ENCODE measurements at regions of chr3 and their contacts with region 1.

Region 1: GRCh38 chr3:18444595-18445400 is 19.7 kb upstream of the SATB1 start:
- DNase-seq: peak; percentile 88
- ATAC-seq: peak; percentile 78
- H3K4me3 ChIP-seq: peak overlapping the region; percentile 38 to 91 (median 88)
- H3K4me3 Mint-ChIP-seq: peak overlapping the region; percentile 95
- H3K27ac ChIP-seq: peak overlapping the region; percentile 85 to 89
- H3K27ac Mint-ChIP-seq: peak overlapping the region; percentile 86
- H3K4me1 ChIP-seq: peaks cover 38 to 46% of the 10 kb centered on the region in 2 donors
- H3K4me1 Mint-ChIP-seq: peaks cover 51% of the 10 kb centered on the region
- H3K27me3 ChIP-seq: peaks cover 0 to 3% (median 0%) of the 10 kb centered on the region in 4 experiments
- H3K27me3 Mint-ChIP-seq: peaks cover 8% of the 10 kb centered on the region
- CTCF ChIP-seq: no peak

Region 2: GRCh38 chr3:18127174-18127858 is 317.5 kb before region 1 on chr3:
- CTCF ChIA-PET with region 1: no interaction called
- POLR2A ChIA-PET with region 1: no interaction called
- intact Hi-C with region 1: loop called (anchors 5 kb)
- DNase-seq: peak; percentile 87
- ATAC-seq: peak; percentile 96
- H3K4me3 ChIP-seq: peak overlapping the region in 3 of 5 experiments; percentile 15 to 30 (median 25)
- H3K4me3 Mint-ChIP-seq: peak overlapping the region; percentile 35
- H3K27ac ChIP-seq: peak overlapping the region; percentile 57 to 72
- H3K27ac Mint-ChIP-seq: peak overlapping the region; percentile 91
- H3K4me1 ChIP-seq: peaks cover 30 to 32% of the 10 kb centered on the region in 2 donors
- H3K4me1 Mint-ChIP-seq: peaks cover 31% of the 10 kb centered on the region
- H3K27me3 ChIP-seq: no peaks in the 10 kb centered on the region
- H3K27me3 Mint-ChIP-seq: no peaks in the 10 kb centered on the region
- CTCF ChIP-seq: peak; percentile 20

Region 3: DNA sequence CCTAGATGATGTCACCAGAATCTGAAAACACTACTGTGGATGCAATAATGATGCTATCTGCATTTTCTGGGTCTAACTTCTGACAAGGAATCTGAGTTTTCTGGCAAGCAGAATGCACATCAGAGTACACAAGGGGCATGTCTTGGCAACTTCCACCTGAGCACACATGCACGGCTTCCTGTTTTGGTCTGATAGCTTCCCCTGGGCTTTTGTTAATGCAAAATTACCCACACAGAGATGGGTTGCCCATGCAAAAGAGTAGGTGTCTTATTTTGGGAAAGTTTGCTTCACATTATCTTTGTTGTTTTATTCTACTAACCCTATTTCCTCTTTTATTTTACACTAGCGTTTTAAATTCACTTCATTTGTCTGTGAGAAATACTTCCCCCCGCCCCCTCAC is 54.5 kb after region 1 on chr3:
- CTCF ChIA-PET with region 1: no interaction called
- POLR2A ChIA-PET with region 1: no interaction called
- intact Hi-C with region 1: loop called (anchors 2 kb)
- DNase-seq: peak; percentile 83
- ATAC-seq: peak; percentile 99
- H3K4me3 ChIP-seq: peak overlapping the region in 2 of 5 experiments; percentile 4 to 43
- H3K4me3 Mint-ChIP-seq: peak overlapping the region; percentile 56
- H3K27ac ChIP-seq: peak overlapping the region; percentile 19 to 72
- H3K27ac Mint-ChIP-seq: peak overlapping the region; percentile 73
- H3K4me1 ChIP-seq: peaks cover 17 to 38% of the 10 kb centered on the region in 2 donors
- H3K4me1 Mint-ChIP-seq: peaks cover 41% of the 10 kb centered on the region
- H3K27me3 ChIP-seq: no peaks in the 10 kb centered on the region
- H3K27me3 Mint-ChIP-seq: no peaks in the 10 kb centered on the region
- CTCF ChIP-seq: no peak

Region 4: DNA sequence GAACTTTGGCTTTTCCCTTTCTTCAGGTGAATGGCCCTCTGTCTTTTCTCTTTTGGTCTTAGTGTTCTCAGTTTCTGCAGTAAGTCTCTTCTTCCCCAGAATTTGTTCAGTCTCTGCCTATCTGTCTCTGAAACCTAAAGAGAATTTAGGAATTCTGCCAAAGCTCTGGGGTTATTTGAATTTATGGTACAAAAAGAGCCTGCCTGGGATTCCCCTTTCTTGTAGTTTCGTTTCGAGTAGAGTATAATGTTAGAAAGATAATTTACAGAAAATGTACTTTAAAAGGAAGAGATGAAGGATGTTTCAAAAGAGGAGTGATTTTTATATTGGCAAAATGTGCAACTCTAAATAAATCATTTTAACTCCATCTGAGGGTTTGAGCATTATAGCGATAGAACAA is 227.8 kb after region 1 on chr3:
- CTCF ChIA-PET with region 1: no interaction called
- POLR2A ChIA-PET with region 1: no interaction called
- intact Hi-C with region 1: no loop called
- DNase-seq: no peak
- ATAC-seq: no peak
- H3K4me3 ChIP-seq: no peak overlapping the region
- H3K4me3 Mint-ChIP-seq: no peak overlapping the region
- H3K27ac ChIP-seq: no peak overlapping the region
- H3K27ac Mint-ChIP-seq: no peak overlapping the region
- H3K4me1 ChIP-seq: peaks cover 0 to 4% of the 10 kb centered on the region in 2 donors
- H3K4me1 Mint-ChIP-seq: peaks cover 3% of the 10 kb centered on the region
- H3K27me3 ChIP-seq: no peaks in the 10 kb centered on the region
- H3K27me3 Mint-ChIP-seq: no peaks in the 10 kb centered on the region
- CTCF ChIP-seq: no peak

Region 5: GRCh38 chr3:18740631-18741583 is 296.1 kb after region 1 on chr3:
- CTCF ChIA-PET with region 1: no interaction called
- POLR2A ChIA-PET with region 1: no interaction called
- intact Hi-C with region 1: loop called (anchors 5 kb)
- DNase-seq: peak; percentile 84
- ATAC-seq: peak; percentile 69
- H3K4me3 ChIP-seq: peak overlapping the region; percentile 24 to 41 (median 38)
- H3K4me3 Mint-ChIP-seq: peak overlapping the region; percentile 81
- H3K27ac ChIP-seq: peak overlapping the region; percentile 79 to 90
- H3K27ac Mint-ChIP-seq: peak overlapping the region; percentile 84
- H3K4me1 ChIP-seq: peaks cover 27 to 44% of the 10 kb centered on the region in 2 donors
- H3K4me1 Mint-ChIP-seq: peaks cover 56% of the 10 kb centered on the region
- H3K27me3 ChIP-seq: no peaks in the 10 kb centered on the region
- H3K27me3 Mint-ChIP-seq: no peaks in the 10 kb centered on the region
- CTCF ChIP-seq: no peak

Region 6: DNA sequence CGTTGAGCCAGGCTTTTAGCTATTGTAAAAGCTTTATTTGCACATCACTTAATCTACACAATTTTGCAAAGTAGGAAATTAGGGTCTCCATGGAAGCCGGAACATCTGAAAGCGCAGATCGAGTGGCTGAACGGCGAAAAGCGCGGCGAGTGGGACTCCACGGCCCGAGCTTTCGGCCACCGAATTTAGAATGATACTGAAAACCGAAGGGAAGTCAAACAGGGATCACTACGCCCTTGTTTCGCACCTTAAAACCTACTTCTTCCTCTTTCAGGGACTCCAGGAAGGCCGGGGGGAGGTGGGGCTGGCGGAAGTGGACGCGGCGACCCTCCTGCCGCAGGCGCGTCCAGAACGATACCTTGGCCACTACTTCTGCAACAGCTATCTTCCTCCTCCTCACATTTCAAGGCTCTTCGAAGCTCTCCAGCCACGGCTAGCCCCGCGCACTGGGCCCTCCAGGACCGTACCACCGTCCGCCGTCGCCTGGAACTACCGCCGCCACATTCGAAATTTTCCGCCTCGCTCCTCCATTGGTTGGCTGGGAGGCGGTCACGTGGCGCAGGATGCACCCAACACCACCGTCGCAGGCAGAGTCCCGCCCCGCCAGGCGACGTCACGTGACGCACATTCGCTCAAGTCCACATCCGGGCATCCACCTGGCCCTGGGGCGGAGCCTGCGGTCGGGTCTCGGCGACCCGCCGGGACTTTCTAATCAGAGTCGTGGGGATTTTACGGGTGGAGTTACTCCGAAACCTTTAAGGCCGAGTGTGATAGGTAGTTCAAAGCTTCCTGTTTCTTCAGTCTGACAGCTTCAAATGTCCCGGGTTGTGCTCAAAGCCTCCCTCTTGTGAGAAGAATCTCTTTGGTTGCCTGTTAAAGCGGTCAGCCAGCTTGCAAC is 1741.2 kb after region 1 on chr3 and contains the start of gene SGO1:
- CTCF ChIA-PET with region 1: no interaction called
- POLR2A ChIA-PET with region 1: no interaction called
- intact Hi-C with region 1: loop called (anchors 10 kb)
- DNase-seq: peak; percentile 100
- ATAC-seq: peak; percentile 91
- H3K4me3 ChIP-seq: peak within 1 kb of the TSS; percentile 70 to 97 (median 85)
- H3K4me3 Mint-ChIP-seq: no peak within 1 kb of the TSS
- H3K27ac ChIP-seq: peak within 1 kb of the TSS; percentile 98
- H3K27ac Mint-ChIP-seq: no peak within 1 kb of the TSS
- H3K4me1 ChIP-seq: peaks cover 19 to 26% of the 10 kb centered on the region in 2 donors
- H3K4me1 Mint-ChIP-seq: peaks cover 4% of the 10 kb centered on the region
- H3K27me3 ChIP-seq: no peaks in the 10 kb centered on the region
- H3K27me3 Mint-ChIP-seq: no peaks in the 10 kb centered on the region
- CTCF ChIP-seq: no peak
- total RNA-seq, gene SGO1: 6.4 and 6.7 TPM in 2 replicates